ENCODE measurements at regions of chr1 and their contacts with region 1.

Region 1: GRCh38 chr1:31970873-31971272 is 32.7 kb upstream of the PTP4A2 start:
- DNase-seq: no peak
- H3K4me3 ChIP-seq: no peak overlapping the region
- H3K27ac ChIP-seq: no peak overlapping the region
- H3K27me3 ChIP-seq: peaks cover 4% of the 10 kb centered on the region
- CTCF ChIP-seq: no peak

Region 2: DNA sequence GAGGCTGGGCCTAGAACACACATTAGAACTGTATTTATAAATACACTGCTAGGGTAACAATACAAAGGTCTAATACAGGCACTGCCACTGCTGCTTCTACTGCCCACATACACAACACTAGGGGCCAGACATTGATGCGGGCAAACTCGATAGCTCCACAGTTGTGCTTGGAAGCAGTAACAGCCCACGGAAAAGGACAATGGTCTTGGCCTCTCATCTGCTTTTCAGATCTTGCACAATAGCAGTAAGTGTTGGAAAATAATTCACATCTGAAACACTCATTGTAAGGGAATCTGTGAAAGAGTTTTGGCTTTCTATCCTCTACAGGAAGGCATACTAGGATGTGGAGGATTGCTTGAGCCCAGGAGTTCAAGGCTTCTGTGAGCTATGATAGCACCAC is 148.1 kb before region 1 on chr1:
- CTCF ChIA-PET with region 1: interaction called, 10 read pairs
- POLR2A ChIA-PET with region 1: interaction called, 5 read pairs
- DNase-seq: no peak
- H3K4me3 ChIP-seq: no peak overlapping the region
- H3K27ac ChIP-seq: no peak overlapping the region
- H3K27me3 ChIP-seq: no peaks in the 10 kb centered on the region
- CTCF ChIP-seq: no peak

Region 3: GRCh38 chr1:31843506-31843905 is 127.4 kb before region 1 on chr1:
- CTCF ChIA-PET with region 1: no interaction called
- POLR2A ChIA-PET with region 1: no interaction called
- DNase-seq: peak; percentile 10
- H3K4me3 ChIP-seq: no peak overlapping the region
- H3K27ac ChIP-seq: no peak overlapping the region
- H3K27me3 ChIP-seq: no peaks in the 10 kb centered on the region
- CTCF ChIP-seq: no peak

Region 4: GRCh38 chr1:32127409-32128198 is 156.7 kb after region 1 on chr1:
- CTCF ChIA-PET with region 1: no interaction called
- POLR2A ChIA-PET with region 1: no interaction called
- DNase-seq: no peak
- H3K4me3 ChIP-seq: no peak overlapping the region
- H3K27ac ChIP-seq: no peak overlapping the region
- H3K27me3 ChIP-seq: no peaks in the 10 kb centered on the region
- CTCF ChIP-seq: no peak